PC-9 (cell line): ENCODE measurements at regions of chr7 and their contacts with region 1.

Region 1: DNA sequence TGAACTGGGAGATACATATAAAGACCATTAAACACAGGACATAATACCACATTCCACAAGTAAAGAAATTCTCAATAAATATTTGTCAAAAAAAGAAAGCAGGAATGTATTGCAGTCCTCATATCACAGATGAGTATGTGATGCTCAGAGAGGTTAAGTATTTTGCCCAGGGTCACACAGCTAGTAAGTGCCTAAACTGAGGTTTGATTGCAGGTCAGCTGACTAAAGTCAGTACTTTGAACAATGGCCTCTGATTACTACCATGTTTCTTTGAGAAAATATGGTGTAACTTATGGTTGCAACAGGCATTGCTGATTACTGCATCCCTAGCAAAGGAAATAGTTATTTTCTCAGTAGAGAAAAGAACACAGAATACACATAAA is 267.1 kb downstream of the ELMO1 start:
- DNase-seq: no peak
- H3K4me3 ChIP-seq: no peak overlapping the region
- H3K27ac ChIP-seq: no peak overlapping the region
- H3K4me1 ChIP-seq: no peaks in the 10 kb centered on the region
- H3K27me3 ChIP-seq: peaks cover 28% of the 10 kb centered on the region; the same call in 1 of the 2 replicates
- CTCF ChIP-seq: no peak

Region 2: DNA sequence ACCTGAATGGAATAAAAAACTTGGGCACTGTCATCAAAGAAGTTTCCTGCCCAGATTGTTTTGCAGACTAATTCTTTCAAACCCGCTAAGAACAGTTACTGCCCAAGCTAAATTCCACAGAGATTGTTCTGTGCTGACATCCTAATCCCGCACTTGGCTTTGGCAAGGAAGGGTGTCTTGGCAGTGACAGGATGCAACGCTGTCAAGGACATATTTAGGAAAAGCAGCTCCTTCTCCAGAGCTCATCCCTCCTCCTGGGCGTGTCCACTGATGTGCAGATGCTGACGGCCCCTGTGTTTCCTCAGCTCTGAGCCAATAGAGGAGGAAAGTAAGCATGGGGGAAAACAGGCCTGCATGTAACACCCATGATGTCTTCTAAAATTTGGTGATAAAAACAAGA is 954.3 kb before region 1 on chr7:
- CTCF ChIA-PET with region 1: no interaction called
- POLR2A ChIA-PET with region 1: interaction called, 13 read pairs
- intact Hi-C with region 1: no loop called
- DNase-seq: no peak
- H3K4me3 ChIP-seq: no peak overlapping the region
- H3K27ac ChIP-seq: no peak overlapping the region
- H3K4me1 ChIP-seq: peaks cover 2% of the 10 kb centered on the region
- H3K27me3 ChIP-seq: no peaks in the 10 kb centered on the region
- CTCF ChIP-seq: no peak

Region 3: DNA sequence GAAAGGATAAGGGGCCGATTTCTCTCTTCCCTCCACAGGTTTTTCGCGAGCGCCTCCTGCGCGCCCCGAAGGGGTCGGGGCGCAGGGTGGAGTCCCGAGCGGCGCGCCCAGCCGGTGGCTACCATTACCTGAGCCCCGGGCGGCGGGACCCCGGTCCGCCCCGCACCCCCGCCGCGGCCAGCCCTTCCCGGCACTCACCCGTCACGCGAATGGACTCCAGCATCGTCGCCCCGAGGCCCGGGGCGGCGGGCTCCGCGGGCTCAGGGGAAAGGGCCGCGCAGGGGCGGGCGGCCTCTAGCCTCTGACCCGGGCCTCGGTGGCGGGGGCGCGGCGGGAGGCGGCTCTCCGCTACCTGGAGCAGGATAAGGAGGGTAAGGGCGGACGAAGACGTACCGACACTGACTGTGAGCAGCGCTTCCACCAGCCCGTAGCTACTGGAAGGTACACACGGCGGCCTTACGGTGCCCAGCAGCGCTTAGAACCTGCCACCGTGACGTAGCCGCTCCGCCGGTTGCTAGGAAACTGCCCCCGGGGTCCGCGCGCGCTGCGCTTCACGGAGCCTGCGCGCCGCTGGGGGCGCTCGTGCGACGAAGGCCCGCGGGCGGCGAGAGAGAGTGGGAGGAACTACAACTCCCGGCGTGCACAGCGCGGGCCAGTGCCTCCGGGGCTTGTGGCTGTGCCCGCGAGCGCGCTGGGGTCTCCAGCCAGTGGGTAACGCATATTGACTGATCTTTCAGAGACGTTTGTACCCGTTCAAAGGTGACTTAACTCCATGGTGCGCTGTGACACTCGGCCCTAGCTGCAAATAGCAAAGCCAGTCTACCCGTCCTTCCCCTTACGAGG is 814.6 kb before region 1 on chr7:
- CTCF ChIA-PET with region 1: interaction called, 15 read pairs
- POLR2A ChIA-PET with region 1: no interaction called
- intact Hi-C with region 1: no loop called
- DNase-seq: peak; percentile 84 to 97
- H3K4me3 ChIP-seq: peak overlapping the region; percentile 86
- H3K27ac ChIP-seq: no peak overlapping the region; the same call in 1 of the 2 replicates
- H3K4me1 ChIP-seq: peaks cover 13% of the 10 kb centered on the region
- H3K27me3 ChIP-seq: no peaks in the 10 kb centered on the region
- CTCF ChIP-seq: peak; percentile 95

Region 4: DNA sequence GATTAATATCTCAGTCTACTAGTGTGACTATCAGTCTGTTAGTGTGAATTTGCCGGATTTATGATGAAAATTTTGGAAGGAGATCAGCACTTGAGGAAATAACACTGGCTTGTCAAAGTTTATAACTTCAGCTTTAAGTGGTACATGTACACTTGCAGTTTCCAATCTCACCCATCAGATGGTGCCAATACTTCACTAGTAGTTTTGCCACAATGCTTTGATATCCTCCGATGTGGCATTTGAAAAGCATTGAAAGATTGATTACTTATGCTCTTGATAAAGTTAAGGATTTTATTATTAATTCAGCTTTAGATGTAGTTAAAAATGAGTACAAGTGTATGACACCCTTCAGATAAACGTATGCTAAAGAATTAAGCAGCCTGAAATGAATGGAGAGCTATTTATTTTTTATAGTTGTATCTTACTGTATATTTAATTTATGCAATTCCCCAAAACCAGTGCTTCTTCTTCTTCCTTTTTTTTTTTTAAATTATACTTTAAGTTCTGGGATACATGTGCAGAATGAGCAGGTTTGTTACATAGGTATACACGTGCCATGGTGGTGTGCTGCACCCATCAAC is 693.7 kb before region 1 on chr7:
- CTCF ChIA-PET with region 1: interaction called, 8 read pairs
- POLR2A ChIA-PET with region 1: no interaction called
- intact Hi-C with region 1: loop called (anchors 1 kb)
- DNase-seq: peak; percentile 21 to 63
- H3K4me3 ChIP-seq: no peak overlapping the region
- H3K27ac ChIP-seq: no peak overlapping the region
- H3K4me1 ChIP-seq: no peaks in the 10 kb centered on the region
- H3K27me3 ChIP-seq: peaks cover 70% of the 10 kb centered on the region
- CTCF ChIP-seq: peak; percentile 83

Region 5: GRCh38 chr7:36639826-36640225 is 541.7 kb before region 1 on chr7:
- CTCF ChIA-PET with region 1: no interaction called
- POLR2A ChIA-PET with region 1: no interaction called
- intact Hi-C with region 1: no loop called
- DNase-seq: no peak
- H3K4me3 ChIP-seq: no peak overlapping the region
- H3K27ac ChIP-seq: no peak overlapping the region
- H3K4me1 ChIP-seq: no peaks in the 10 kb centered on the region
- H3K27me3 ChIP-seq: peaks cover 100% of the 10 kb centered on the region
- CTCF ChIP-seq: no peak

Region 6: GRCh38 chr7:36967387-36967786 is 214.2 kb before region 1 on chr7:
- CTCF ChIA-PET with region 1: interaction called, 29 read pairs
- POLR2A ChIA-PET with region 1: no interaction called
- intact Hi-C with region 1: loop called (anchors 1 kb)
- DNase-seq: peak; percentile 48 to 55
- H3K4me3 ChIP-seq: no peak overlapping the region
- H3K27ac ChIP-seq: no peak overlapping the region
- H3K4me1 ChIP-seq: no peaks in the 10 kb centered on the region
- H3K27me3 ChIP-seq: peaks cover 17% of the 10 kb centered on the region; the same call in 1 of the 2 replicates
- CTCF ChIP-seq: peak; percentile 96

Region 7: GRCh38 chr7:36986429-36987362 is 194.8 kb before region 1 on chr7:
- CTCF ChIA-PET with region 1: interaction called, 6 read pairs
- POLR2A ChIA-PET with region 1: no interaction called
- intact Hi-C with region 1: loop called (anchors 1 kb)
- DNase-seq: peak in 1 of 2 experiments; percentile 51
- H3K4me3 ChIP-seq: no peak overlapping the region
- H3K27ac ChIP-seq: no peak overlapping the region
- H3K4me1 ChIP-seq: no peaks in the 10 kb centered on the region
- H3K27me3 ChIP-seq: peaks cover 30% of the 10 kb centered on the region
- CTCF ChIP-seq: peak; percentile 94

Region 8: DNA sequence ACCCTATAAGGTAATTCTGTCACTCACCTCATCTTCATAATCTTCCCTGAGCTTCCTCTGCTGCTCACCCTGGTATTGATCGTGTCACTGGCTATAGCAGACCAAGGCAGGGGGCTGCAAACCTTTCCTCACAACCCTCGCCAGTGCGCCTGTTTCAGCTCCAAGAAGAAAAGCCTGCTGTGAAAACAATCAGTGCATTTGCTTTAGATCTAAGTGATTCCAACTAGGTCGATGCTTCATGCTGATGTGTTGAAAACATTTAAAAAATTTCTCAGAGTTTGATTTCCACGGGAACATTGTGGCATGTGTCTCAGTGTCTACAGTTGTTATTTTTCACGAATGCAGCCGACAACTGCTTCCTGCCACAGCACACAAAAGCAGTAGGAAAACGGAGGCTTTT is 1823.5 kb after region 1 on chr7:
- CTCF ChIA-PET with region 1: no interaction called
- POLR2A ChIA-PET with region 1: no interaction called
- intact Hi-C with region 1: no loop called
- DNase-seq: no peak
- H3K4me3 ChIP-seq: no peak overlapping the region
- H3K27ac ChIP-seq: no peak overlapping the region
- H3K4me1 ChIP-seq: no peaks in the 10 kb centered on the region
- H3K27me3 ChIP-seq: peaks cover 59% of the 10 kb centered on the region
- CTCF ChIP-seq: no peak